ENCODE measurements at regions of chr12 and their contacts with region 1.

Region 1: GRCh38 chr12:68236421-68237059 is 10.9 kb upstream of the IL26 start:
- DNase-seq: peak; percentile 4 to 85 (median 14)
- ATAC-seq: peak; percentile 79
- H3K4me3 ChIP-seq: peak overlapping the region; percentile 56
- H3K4me3 Mint-ChIP-seq: peak overlapping the region; percentile 92
- H3K27ac ChIP-seq: peak overlapping the region; percentile 0 to 50
- H3K27ac Mint-ChIP-seq: peak overlapping the region; percentile 89
- H3K4me1 ChIP-seq: peaks cover 29% of the 10 kb centered on the region
- H3K4me1 Mint-ChIP-seq: peaks cover 61% of the 10 kb centered on the region
- H3K27me3 ChIP-seq: no peaks in the 10 kb centered on the region
- H3K27me3 Mint-ChIP-seq: no peaks in the 10 kb centered on the region
- CTCF ChIP-seq: no peak

Region 2: GRCh38 chr12:68317047-68317667 is 80.6 kb after region 1 on chr12:
- CTCF ChIA-PET with region 1: no interaction called
- POLR2A ChIA-PET with region 1: interaction called, 3 read pairs
- intact Hi-C with region 1: loop called in 1 of 2 experiments (anchors 5 kb)
- DNase-seq: peak in 10 of 14 experiments; percentile 16 to 79 (median 24)
- ATAC-seq: no peak
- H3K4me3 ChIP-seq: no peak overlapping the region
- H3K4me3 Mint-ChIP-seq: no peak overlapping the region
- H3K27ac ChIP-seq: no peak overlapping the region
- H3K27ac Mint-ChIP-seq: no peak overlapping the region
- H3K4me1 ChIP-seq: no peaks in the 10 kb centered on the region
- H3K4me1 Mint-ChIP-seq: no peaks in the 10 kb centered on the region
- H3K27me3 ChIP-seq: no peaks in the 10 kb centered on the region
- H3K27me3 Mint-ChIP-seq: no peaks in the 10 kb centered on the region
- CTCF ChIP-seq: peak; percentile 86

Region 3: GRCh38 chr12:68686595-68687521 is 450.3 kb after region 1 on chr12 and contains the start of gene NUP107:
- CTCF ChIA-PET with region 1: no interaction called
- POLR2A ChIA-PET with region 1: no interaction called
- intact Hi-C with region 1: loop called in 1 of 2 experiments (anchors 5 kb)
- DNase-seq: peak; percentile 94 to 99 (median 97)
- ATAC-seq: peak; percentile 94
- H3K4me3 ChIP-seq: peak within 1 kb of the TSS; percentile 82
- H3K4me3 Mint-ChIP-seq: peak within 1 kb of the TSS; percentile 100
- H3K27ac ChIP-seq: peak within 1 kb of the TSS; percentile 58 to 65
- H3K27ac Mint-ChIP-seq: peak within 1 kb of the TSS; percentile 98
- H3K4me1 ChIP-seq: peaks cover 11% of the 10 kb centered on the region
- H3K4me1 Mint-ChIP-seq: peaks cover 47% of the 10 kb centered on the region
- H3K27me3 ChIP-seq: no peaks in the 10 kb centered on the region
- H3K27me3 Mint-ChIP-seq: no peaks in the 10 kb centered on the region
- CTCF ChIP-seq: no peak
- total RNA-seq, gene NUP107: 37.2 to 38.7 TPM

Measured in CD4-positive, alpha-beta T cell (primary cell).